ENCODE measurements at regions of chr18 and their contacts with region 1.

Region 1: DNA sequence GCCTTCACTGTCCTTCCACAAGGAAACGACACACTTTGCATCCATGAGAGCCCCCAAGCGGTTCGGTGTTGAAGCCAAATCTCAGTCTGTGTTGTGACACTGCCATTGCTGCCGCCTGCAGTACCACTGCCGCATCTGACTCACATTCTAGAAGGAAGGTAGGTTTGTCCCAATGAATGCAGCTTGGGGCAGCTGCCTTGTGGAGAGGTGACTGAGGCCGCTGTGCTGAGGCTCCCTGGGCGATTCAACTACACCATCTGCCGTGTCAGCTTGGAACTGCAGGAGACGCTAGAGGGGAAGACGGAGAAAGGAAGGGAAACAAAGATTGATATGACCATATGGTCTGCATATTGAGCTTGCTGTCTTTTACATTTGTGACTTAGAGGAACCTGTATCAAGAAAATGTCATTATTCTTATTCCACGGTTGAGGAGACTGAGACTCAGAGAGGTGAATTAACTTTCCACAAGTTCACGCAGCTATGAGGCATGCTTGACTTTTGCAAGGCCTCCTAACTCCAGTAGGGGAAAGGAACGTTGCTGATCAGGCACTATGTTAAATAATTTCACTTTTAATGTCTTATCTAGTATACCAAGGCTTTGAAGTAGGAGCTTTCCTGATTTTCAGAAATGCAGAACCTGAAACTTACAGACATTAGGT is 43.5 kb upstream of the LMAN1 start:
- DNase-seq: peak; percentile 56 to 62
- ATAC-seq: peak; percentile 76 to 97 (median 84)
- H3K4me3 ChIP-seq: no peak overlapping the region
- H3K27ac ChIP-seq: no peak overlapping the region
- H3K4me1 ChIP-seq: no peaks in the 10 kb centered on the region
- H3K27me3 ChIP-seq: no peaks in the 10 kb centered on the region
- CTCF ChIP-seq: peak; percentile 79 to 98 (median 91)

Region 2: DNA sequence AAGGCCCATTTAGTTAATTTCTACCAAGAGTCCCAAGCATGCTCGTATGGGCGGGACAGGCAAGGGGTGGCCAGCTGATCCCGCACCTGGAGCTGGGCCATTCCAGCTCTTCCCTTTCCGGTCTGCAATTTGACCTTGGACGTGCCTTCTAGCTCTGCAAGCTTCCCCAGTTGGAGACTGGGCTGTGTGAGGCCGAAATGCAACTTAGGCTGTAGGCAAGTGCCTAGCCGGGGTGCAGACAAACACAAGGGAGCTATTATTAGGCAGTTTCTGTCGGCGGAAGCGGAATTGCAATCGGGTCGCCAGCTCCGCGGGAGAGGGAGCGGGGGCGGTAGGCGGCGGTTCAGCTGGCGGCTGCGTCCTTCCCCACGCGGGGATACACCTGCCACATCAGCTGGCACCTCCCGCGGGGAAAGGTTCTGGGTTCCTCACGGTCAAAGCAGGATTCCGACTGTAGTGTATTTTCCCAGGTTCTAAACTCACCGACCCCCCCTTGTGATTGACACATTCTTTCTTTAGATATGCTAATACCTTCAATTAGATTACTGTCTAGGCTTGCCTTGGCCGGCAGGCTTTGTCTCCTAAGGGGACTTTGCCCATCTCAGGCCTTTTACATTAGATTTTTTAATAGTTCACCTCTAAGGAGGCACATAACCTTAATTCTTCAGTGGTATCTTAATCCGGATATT is 555.0 kb before region 1 on chr18:
- intact Hi-C with region 1: no loop called
- DNase-seq: peak; percentile 44 to 60
- ATAC-seq: peak; percentile 30 to 77 (median 69)
- H3K4me3 ChIP-seq: peak overlapping the region in 9 of 10 donors; percentile 25 to 53 (median 44)
- H3K27ac ChIP-seq: peak overlapping the region; percentile 14 to 76 (median 60)
- H3K4me1 ChIP-seq: peaks cover 0 to 60% (median 23%) of the 10 kb centered on the region in 9 donors
- H3K27me3 ChIP-seq: peaks cover 0 to 7% (median 0%) of the 10 kb centered on the region in 7 donors
- CTCF ChIP-seq: no peak

Region 3: DNA sequence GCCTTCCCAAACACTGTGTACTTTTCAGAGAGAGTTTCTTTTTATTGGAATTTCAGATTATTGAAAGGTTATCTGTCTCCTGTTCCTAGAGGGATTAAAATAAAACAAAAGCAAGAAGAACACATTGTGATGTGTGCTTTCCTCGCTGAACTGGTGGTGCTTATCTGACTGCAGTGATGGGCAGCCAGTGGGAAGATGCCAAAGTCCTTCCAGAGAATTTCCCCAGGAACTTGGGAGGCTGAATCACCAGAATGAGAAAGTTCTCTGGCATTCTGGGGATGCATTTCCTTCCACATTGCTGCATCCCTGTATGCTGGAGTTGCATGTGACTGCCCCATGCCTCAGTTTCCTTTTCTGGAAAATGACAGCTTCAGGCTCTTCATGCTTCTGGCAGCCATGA is 316.8 kb before region 1 on chr18:
- intact Hi-C with region 1: loop called in 4 of 10 experiments (anchors 5 to 10 kb)
- DNase-seq: no peak
- ATAC-seq: no peak
- H3K4me3 ChIP-seq: no peak overlapping the region
- H3K27ac ChIP-seq: no peak overlapping the region
- H3K4me1 ChIP-seq: no peaks in the 10 kb centered on the region
- H3K27me3 ChIP-seq: peaks cover 0 to 32% (median 10%) of the 10 kb centered on the region in 7 donors
- CTCF ChIP-seq: no peak

Region 4: GRCh38 chr18:59249205-59249774 is 153.3 kb before region 1 on chr18:
- intact Hi-C with region 1: loop called in 8 of 10 experiments (anchors 2 to 5 kb)
- DNase-seq: peak in 1 of 2 donors; percentile 42
- ATAC-seq: peak in 4 of 8 donors; percentile 33 to 64 (median 45)
- H3K4me3 ChIP-seq: no peak overlapping the region
- H3K27ac ChIP-seq: no peak overlapping the region
- H3K4me1 ChIP-seq: no peaks in the 10 kb centered on the region
- H3K27me3 ChIP-seq: peaks cover 8 to 56% (median 41%) of the 10 kb centered on the region in 7 donors
- CTCF ChIP-seq: peak; percentile 22 to 75 (median 66)

Region 5: GRCh38 chr18:59308248-59308937 is 94.2 kb before region 1 on chr18:
- intact Hi-C with region 1: loop called (anchors 2 to 5 kb)
- DNase-seq: peak; percentile 69 to 83
- ATAC-seq: peak; percentile 94 to 99 (median 96)
- H3K4me3 ChIP-seq: peak overlapping the region in 7 of 10 donors; percentile 27 to 53 (median 38)
- H3K27ac ChIP-seq: no peak overlapping the region
- H3K4me1 ChIP-seq: peaks cover 0 to 13% (median 6%) of the 10 kb centered on the region in 9 donors
- H3K27me3 ChIP-seq: peaks cover 0 to 74% (median 44%) of the 10 kb centered on the region in 7 donors
- CTCF ChIP-seq: peak; percentile 71 to 91 (median 81)

Region 6: DNA sequence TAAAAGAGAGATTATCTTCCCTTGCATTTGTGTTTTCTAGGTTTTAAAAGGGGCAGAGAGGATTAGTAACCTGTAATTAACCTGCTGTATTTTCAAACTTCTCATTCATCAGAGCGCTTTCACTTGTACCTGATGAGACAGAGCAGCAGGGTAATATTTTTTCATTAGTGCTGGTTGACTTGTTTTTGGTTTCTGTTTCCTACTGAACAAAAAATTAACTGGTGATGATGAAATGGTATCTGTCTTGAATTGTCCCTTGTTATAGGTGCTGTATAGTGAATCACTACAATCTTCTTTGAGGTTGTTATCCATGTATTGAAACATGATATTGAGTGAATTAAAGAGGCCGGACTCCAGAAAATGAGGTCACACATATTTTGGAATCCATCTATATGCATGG is 1968.5 kb after region 1 on chr18:
- intact Hi-C with region 1: no loop called
- DNase-seq: no peak
- ATAC-seq: no peak
- H3K4me3 ChIP-seq: no peak overlapping the region
- H3K27ac ChIP-seq: no peak overlapping the region
- H3K4me1 ChIP-seq: no peaks in the 10 kb centered on the region
- H3K27me3 ChIP-seq: no peaks in the 10 kb centered on the region
- CTCF ChIP-seq: no peak

Measured in heart right ventricle (tissue), 16 donors.